ENCODE measurements at regions of chr16 and their contacts with region 1.

Region 1: DNA sequence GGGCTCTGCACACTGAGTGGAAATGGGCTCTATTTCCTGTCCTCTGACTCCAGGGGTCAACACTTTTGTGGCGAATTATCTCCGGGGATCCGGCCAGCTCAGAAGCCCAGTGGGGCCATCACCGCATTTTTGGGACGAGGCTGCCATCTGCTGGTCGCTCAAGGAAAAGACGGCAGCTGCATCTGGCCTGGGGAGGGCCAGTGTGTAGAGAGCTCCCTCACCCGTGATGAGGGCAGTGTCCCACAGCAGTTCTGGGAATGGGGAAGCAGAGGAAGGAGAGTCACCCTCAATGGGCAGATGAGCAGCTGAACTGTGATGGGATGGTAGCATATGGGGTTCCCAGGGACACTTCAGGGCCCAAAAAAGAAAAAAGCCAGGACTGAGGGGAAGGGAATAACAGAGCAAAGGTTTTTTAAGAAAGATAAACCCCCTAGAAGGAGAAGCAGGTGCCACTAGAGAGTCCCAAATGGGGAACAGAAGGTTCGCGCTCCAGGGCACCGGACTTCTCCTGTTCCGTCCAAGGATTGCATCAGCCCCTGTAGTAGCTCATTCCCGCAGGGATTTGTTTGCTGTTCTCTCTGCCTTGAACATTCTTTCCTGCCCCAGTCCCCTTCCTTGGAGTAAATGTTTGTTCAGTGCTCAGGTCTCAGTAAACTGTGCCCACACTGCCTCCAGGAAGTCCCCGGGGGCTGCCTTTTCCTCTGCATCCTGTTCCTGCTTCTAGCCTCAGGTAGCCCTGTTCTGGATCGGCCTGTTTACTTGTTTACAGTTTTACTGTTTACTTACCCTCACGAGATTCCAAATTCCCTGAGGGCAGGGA is 9.3 kb upstream of the ABCC12 start:
- DNase-seq: peak; percentile 88
- H3K4me3 Mint-ChIP-seq: peak overlapping the region; percentile 8
- H3K27ac Mint-ChIP-seq: peak overlapping the region; percentile 55
- H3K4me1 Mint-ChIP-seq: peaks cover 14% of the 10 kb centered on the region
- H3K27me3 Mint-ChIP-seq: no peaks in the 10 kb centered on the region
- CTCF ChIP-seq: peak; percentile 93

Region 2: GRCh38 chr16:46947900-46948547 is 1217.1 kb before region 1 on chr16:
- CTCF ChIA-PET with region 1: interaction called, 3 read pairs
- intact Hi-C with region 1: loop called (anchors 1 kb)
- DNase-seq: peak; percentile 66
- H3K4me3 Mint-ChIP-seq: no peak overlapping the region
- H3K27ac Mint-ChIP-seq: no peak overlapping the region
- H3K4me1 Mint-ChIP-seq: peaks cover 9% of the 10 kb centered on the region
- H3K27me3 Mint-ChIP-seq: no peaks in the 10 kb centered on the region
- CTCF ChIP-seq: peak; percentile 57

Region 3: GRCh38 chr16:47037746-47038458 is 1127.2 kb before region 1 on chr16:
- CTCF ChIA-PET with region 1: interaction called, 18 read pairs
- intact Hi-C with region 1: loop called (anchors 2 kb)
- DNase-seq: peak; percentile 97
- H3K4me3 Mint-ChIP-seq: peak overlapping the region; percentile 76
- H3K27ac Mint-ChIP-seq: no peak overlapping the region
- H3K4me1 Mint-ChIP-seq: no peaks in the 10 kb centered on the region
- H3K27me3 Mint-ChIP-seq: peaks cover 25% of the 10 kb centered on the region
- CTCF ChIP-seq: peak; percentile 94

Region 4: GRCh38 chr16:47460711-47461597 is 704.2 kb before region 1 on chr16 and contains the starts of genes ITFG1 and PHKB:
- CTCF ChIA-PET with region 1: interaction called, 6 read pairs
- intact Hi-C with region 1: loop called (anchors 10 kb)
- DNase-seq: peak; percentile 98
- H3K4me3 Mint-ChIP-seq: peak within 1 kb of the TSS; percentile 88
- H3K27ac Mint-ChIP-seq: peak within 1 kb of the TSS; percentile 97
- H3K4me1 Mint-ChIP-seq: peaks cover 18% of the 10 kb centered on the region
- H3K27me3 Mint-ChIP-seq: no peaks in the 10 kb centered on the region
- CTCF ChIP-seq: no peak
- total RNA-seq, gene ITFG1: 65.5 and 68.6 TPM in 2 replicates
- total RNA-seq, gene PHKB: 80.4 and 83.4 TPM in 2 replicates

Region 5: GRCh38 chr16:48054881-48055601 is 110.1 kb before region 1 on chr16:
- CTCF ChIA-PET with region 1: interaction called, 18 read pairs
- intact Hi-C with region 1: no loop called
- DNase-seq: peak; percentile 52
- H3K4me3 Mint-ChIP-seq: no peak overlapping the region
- H3K27ac Mint-ChIP-seq: no peak overlapping the region
- H3K4me1 Mint-ChIP-seq: no peaks in the 10 kb centered on the region
- H3K27me3 Mint-ChIP-seq: peaks cover 74% of the 10 kb centered on the region
- CTCF ChIP-seq: peak; percentile 81

Region 6: GRCh38 chr16:48256579-48257177 is 91.6 kb after region 1 on chr16:
- CTCF ChIA-PET with region 1: no interaction called
- intact Hi-C with region 1: no loop called
- DNase-seq: no peak
- H3K4me3 Mint-ChIP-seq: no peak overlapping the region
- H3K27ac Mint-ChIP-seq: no peak overlapping the region
- H3K4me1 Mint-ChIP-seq: peaks cover under 1% of the 10 kb centered on the region
- H3K27me3 Mint-ChIP-seq: no peaks in the 10 kb centered on the region
- CTCF ChIP-seq: no peak

Measured in Calu3 (cell line).